T-cell (primary cell): ENCODE measurements at regions of chr1 and their contacts with region 1.

Region 1: DNA sequence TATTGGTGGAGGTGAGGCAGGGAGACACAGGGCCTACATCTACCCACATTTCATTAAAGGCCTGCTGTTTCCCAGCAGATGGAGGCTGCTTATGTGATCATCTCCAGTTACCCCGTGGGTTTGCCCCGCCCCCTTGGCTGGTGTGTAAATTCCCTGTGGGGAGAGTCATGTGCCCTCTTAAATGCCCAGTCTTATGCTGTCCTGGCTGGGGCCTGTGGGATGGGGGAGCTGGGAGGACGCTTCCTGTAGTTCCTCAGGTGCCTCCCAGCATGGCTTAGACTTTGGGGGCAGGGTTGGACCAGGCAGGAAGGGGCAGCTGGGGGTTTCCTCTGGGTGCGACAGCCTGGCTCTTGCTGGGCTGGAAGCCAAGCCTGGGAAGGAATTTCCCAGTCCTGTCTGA is 15.5 kb upstream of the CITED4 start:
- DNase-seq: peak in 1 of 35 experiments; percentile 22
- ATAC-seq: no peak
- H3K4me3 ChIP-seq: no peak overlapping the region
- H3K4me3 Mint-ChIP-seq: no peak overlapping the region
- H3K27ac ChIP-seq: peak overlapping the region; percentile 13
- H3K27ac Mint-ChIP-seq: no peak overlapping the region
- H3K4me1 ChIP-seq: peaks cover 0 to 25% of the 10 kb centered on the region in 2 experiments
- H3K4me1 Mint-ChIP-seq: peaks cover 12 to 36% (median 23%) of the 10 kb centered on the region in 3 donors
- H3K27me3 ChIP-seq: peaks cover 0 to 18% of the 10 kb centered on the region in 2 experiments
- H3K27me3 Mint-ChIP-seq: peaks cover 9 to 10% of the 10 kb centered on the region in 2 donors

Region 2: DNA sequence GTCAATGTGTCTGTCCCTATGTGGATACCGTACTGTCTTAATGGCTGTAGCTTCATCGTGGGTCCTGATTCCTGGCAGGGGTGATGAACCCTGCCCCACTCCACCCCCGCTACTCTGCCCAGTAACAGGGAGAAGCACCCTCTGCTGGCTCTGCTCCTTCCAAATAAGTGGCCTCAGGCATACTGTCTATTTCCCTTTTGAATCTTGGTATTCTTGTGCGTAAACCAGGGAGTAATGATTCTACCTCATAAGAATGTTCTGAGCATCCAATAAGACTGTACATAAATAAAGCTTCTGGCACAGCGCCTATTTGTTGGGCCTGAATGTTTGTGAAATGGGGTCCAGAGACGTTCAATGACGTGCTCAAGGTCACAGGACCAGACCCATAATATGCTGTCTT is 66.6 kb after region 1 on chr1:
- CTCF ChIA-PET with region 1: no interaction called
- POLR2A ChIA-PET with region 1: no interaction called
- DNase-seq: no peak
- ATAC-seq: no peak
- H3K4me3 ChIP-seq: no peak overlapping the region
- H3K4me3 Mint-ChIP-seq: no peak overlapping the region
- H3K27ac ChIP-seq: no peak overlapping the region
- H3K27ac Mint-ChIP-seq: no peak overlapping the region
- H3K4me1 ChIP-seq: no peaks in the 10 kb centered on the region
- H3K4me1 Mint-ChIP-seq: peaks cover 3 to 6% (median 4%) of the 10 kb centered on the region in 3 donors
- H3K27me3 ChIP-seq: peaks cover 0 to 7% of the 10 kb centered on the region in 2 experiments
- H3K27me3 Mint-ChIP-seq: peaks cover 16 to 20% of the 10 kb centered on the region in 2 donors

Region 3: DNA sequence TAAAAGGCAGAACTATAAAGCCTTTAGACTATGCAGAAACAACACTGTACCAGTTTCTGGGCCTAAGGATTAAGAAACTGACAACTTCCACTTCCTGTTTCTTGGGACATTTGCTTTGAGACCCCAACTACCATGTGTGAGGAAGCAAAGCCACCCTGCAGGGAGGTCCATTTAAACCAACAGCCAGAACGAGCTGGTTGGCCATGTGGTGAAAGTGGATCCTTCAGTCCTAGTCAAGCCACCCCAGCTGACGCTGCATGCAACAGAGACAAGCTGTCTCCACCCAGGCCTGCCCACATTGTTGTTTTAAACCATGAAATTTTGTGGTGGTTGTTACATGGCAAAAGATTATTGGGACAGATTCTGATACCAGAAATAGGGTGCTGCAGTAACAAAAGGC is 175.6 kb after region 1 on chr1:
- CTCF ChIA-PET with region 1: no interaction called
- POLR2A ChIA-PET with region 1: interaction called in 1 of 2 experiments, 11 read pairs
- DNase-seq: no peak
- ATAC-seq: no peak
- H3K4me3 ChIP-seq: no peak overlapping the region
- H3K4me3 Mint-ChIP-seq: no peak overlapping the region
- H3K27ac ChIP-seq: no peak overlapping the region
- H3K27ac Mint-ChIP-seq: no peak overlapping the region
- H3K4me1 ChIP-seq: no peaks in the 10 kb centered on the region
- H3K4me1 Mint-ChIP-seq: no peaks in the 10 kb centered on the region
- H3K27me3 ChIP-seq: no peaks in the 10 kb centered on the region
- H3K27me3 Mint-ChIP-seq: no peaks in the 10 kb centered on the region